Activated naive CD4-positive, alpha-beta T cell treated with anti-CD3 and anti-CD28 coated beads for 36 hours (primary cell): ENCODE measurements at regions of chr4 and their contacts with region 1.

Region 1: GRCh38 chr4:114512595-114513295 is 85.9 kb upstream of the UGT8 start:
- DNase-seq: no peak
- H3K4me3 Mint-ChIP-seq: no peak overlapping the region
- H3K27ac Mint-ChIP-seq: no peak overlapping the region
- H3K4me1 Mint-ChIP-seq: no peaks in the 10 kb centered on the region
- H3K27me3 Mint-ChIP-seq: peaks cover 2% of the 10 kb centered on the region

Region 2: GRCh38 chr4:114458728-114459127 is 54.0 kb before region 1 on chr4:
- CTCF ChIA-PET with region 1: no interaction called
- intact Hi-C with region 1: no loop called
- DNase-seq: no peak
- H3K4me3 Mint-ChIP-seq: no peak overlapping the region
- H3K27ac Mint-ChIP-seq: no peak overlapping the region
- H3K4me1 Mint-ChIP-seq: no peaks in the 10 kb centered on the region
- H3K27me3 Mint-ChIP-seq: peaks cover 3% of the 10 kb centered on the region

Region 3: DNA sequence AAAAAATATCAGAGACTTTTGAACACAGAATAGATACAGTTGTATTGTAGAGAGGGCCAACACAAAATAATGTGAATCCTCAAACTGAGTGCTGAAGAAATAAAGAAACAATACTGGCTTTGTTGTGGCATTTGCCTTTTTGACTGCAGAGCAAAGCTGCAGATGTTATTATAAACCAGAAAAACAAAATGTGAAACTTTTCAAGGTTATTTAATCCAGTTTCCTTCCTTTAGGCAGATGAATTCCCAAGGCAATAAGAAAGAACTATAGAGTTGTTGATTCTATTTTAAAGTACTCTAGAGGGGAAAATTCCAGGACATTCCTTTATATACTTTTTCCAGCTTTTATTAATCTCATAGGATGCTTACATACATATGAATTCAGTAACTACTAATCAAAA is 413.8 kb after region 1 on chr4:
- CTCF ChIA-PET with region 1: no interaction called
- intact Hi-C with region 1: loop called (anchors 5 kb)
- DNase-seq: no peak
- H3K4me3 Mint-ChIP-seq: no peak overlapping the region
- H3K27ac Mint-ChIP-seq: no peak overlapping the region
- H3K4me1 Mint-ChIP-seq: no peaks in the 10 kb centered on the region
- H3K27me3 Mint-ChIP-seq: no peaks in the 10 kb centered on the region